Cardiac septum (tissue), 1 donor: ENCODE measurements at regions of chr9 and their contacts with region 1.

Region 1: DNA sequence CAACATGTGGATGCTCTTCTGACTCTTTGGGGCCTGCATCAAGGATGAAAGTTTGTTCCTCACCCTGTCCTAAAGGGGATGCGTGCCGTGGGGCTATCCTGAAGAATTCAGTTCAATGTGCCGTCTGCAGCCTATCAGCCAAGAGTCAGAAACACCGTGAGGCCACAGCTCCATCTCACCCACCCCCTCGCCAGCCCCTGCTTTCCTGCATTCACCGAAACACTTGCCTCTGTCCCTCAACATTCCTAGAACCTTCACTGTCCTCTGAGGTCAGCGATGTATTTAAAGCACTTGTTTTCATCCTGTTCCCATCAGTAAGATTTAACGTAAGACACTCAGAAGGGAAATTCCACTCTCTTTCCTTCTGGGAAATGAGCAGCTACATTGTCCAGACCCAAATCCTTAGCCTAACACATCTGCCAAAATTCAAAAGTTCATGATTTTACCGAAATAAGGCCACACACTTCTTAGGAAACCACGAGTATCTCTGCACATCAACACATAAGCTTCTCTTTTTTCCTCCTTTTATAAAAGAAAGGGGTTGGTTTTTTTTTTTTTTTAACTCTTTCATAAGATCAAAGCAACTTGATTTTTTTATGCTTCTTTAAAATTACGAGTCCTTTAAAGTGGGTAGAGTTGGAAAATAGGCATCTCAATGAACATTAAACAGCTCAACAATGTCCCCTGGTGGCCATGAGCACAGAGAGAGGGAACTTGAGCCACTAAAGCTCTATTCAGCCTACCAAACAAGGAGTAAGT is 100.7 kb downstream of the SUSD1 start:
- DNase-seq: no peak

Region 2: DNA sequence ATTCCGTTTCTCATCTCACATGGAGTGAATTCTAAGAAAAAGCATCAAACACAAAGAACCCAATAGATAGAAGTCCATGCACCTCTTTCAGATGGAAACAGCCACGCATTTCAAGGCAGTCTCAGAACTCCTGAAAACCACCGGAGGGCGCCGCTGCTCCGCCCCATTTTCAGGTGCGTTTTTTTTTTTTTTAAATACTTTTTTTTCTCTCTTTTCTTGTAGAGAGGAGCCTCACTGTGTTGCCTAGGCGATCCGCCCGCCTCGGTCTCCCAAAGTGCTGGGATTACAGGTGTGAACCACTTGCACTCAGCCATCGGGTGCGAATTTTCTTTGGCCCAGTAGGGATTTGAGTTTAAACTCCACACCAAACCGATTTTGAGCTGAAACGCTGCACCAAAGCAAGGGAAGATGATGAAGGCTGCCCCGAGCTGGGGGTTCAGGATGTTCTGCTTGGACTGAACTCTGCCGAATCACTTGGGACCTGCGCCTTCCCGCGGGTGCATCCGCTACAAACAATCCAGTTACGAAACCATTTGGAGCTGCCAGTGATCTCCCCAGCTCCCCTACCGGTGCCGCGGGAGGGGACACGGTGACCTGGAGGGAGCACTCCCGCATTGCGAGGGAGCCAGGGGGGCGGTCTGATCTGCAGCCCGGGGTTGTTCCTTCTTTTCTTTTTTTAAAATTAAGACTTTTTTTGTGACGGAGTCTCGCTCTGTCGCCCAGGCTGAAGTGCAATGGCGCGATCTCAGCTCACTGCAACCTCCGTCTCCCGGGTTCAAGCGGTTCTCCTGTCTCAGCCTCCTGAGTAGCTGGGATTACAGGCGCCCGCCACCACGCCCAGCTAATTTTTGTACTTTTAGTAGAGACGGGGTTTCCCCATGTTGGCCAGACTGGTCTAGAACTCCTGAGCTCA is 476.4 kb before region 1 on chr9:
- intact Hi-C with region 1: loop called (anchors 5 kb)
- DNase-seq: no peak

Region 3: DNA sequence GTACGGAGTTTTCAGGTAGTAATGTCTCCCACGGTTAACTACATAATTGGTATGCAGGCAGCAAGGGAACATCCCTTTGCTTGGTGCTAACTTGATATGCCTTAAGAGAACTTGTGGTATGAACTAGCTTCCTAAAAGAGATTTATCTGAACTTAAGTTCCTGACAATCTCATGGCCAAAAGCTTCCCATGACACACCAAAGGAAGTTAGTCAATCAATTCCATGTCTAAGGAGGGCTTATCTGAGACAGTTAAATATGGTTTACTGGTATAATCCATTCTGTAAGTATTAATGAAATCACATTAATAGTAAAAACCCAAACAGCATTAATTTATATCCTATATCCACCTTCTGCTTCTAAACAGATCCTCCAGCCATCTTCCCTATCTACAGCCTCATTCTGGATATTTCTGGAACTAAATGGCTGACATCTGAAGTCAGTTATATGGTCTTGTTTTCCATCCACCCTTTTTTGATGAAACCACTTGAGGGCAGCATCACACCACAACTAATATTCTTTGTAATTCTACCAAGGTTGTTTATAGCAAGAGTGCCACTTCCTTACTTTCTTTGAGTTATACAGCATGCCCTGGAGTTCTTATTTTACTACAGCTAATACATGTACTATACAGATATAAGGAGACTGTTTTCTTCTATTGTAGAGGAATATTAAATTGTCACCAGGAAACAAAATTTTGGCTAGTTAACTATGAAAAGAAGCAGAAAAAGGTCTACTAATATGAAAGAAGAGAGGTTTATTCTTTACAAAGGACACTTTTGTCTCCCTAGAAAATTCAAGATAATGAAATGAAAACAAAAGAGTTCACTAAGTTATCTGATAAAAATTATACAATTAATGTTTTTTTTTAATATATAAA is 314.4 kb before region 1 on chr9:
- intact Hi-C with region 1: loop called (anchors 1 kb)
- DNase-seq: no peak

Region 4: DNA sequence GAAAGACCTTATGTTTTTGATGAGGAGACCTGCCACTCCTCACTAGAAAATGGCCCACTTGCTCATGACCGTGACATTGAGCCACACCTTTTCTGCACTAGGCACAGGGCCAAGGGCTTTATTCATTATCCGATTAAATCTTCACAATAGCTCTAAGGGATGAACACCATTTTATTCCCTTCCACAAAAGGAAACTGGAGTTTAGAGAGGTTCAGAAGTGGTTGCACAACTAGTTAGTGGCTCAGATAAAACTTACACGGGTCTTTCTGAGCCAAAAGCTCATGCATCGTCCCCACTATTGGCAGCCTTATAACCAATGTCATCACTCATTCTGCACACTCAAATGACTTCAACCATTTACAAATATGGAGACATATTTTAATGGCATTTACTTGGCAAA is 61.3 kb after region 1 on chr9:
- intact Hi-C with region 1: no loop called
- DNase-seq: no peak

Region 5: DNA sequence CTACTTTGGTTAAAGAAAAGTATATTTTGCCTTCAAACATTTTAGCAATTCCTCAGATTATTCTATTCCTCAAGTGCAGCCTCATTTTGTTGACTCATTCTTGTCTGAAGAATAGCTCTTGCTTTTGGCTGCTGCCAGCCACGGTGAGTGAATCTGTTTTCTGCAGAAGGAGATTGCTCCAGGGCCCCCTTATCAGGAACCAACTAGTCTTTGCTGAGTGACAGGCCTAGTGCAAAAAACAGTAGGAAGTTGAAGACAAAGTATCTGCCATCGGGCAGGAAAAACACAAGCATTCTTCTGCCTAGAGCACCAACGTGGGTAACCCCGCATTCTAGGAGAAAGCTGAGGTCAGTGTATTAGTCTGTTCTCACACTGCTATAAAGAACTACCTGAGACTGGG is 895.3 kb after region 1 on chr9:
- intact Hi-C with region 1: no loop called
- DNase-seq: no peak